Endothelial cell of umbilical vein (primary cell): ENCODE measurements at regions of chr7 and their contacts with region 1.

Region 1: GRCh38 chr7:91826377-91826776 is 54.1 kb downstream of the MTERF1 start:
- DNase-seq: no peak
- H3K4me3 ChIP-seq: no peak overlapping the region
- H3K27ac ChIP-seq: no peak overlapping the region
- H3K4me1 ChIP-seq: no peaks in the 10 kb centered on the region
- H3K27me3 ChIP-seq: no peaks in the 10 kb centered on the region
- CTCF ChIP-seq: no peak
- POLR2A ChIP-seq: no peak

Region 2: GRCh38 chr7:91852263-91852741 is 25.9 kb after region 1 on chr7:
- CTCF ChIA-PET with region 1: interaction called, 51 read pairs
- POLR2A ChIA-PET with region 1: no interaction called
- dilution Hi-C with region 1: no loop called
- intact Hi-C with region 1: loop called (anchors 1 kb)
- DNase-seq: peak; percentile 48
- H3K4me3 ChIP-seq: no peak overlapping the region
- H3K27ac ChIP-seq: no peak overlapping the region
- H3K4me1 ChIP-seq: no peaks in the 10 kb centered on the region
- H3K27me3 ChIP-seq: no peaks in the 10 kb centered on the region
- CTCF ChIP-seq: peak in 1 of 2 donors; percentile 29
- POLR2A ChIP-seq: no peak

Region 3: DNA sequence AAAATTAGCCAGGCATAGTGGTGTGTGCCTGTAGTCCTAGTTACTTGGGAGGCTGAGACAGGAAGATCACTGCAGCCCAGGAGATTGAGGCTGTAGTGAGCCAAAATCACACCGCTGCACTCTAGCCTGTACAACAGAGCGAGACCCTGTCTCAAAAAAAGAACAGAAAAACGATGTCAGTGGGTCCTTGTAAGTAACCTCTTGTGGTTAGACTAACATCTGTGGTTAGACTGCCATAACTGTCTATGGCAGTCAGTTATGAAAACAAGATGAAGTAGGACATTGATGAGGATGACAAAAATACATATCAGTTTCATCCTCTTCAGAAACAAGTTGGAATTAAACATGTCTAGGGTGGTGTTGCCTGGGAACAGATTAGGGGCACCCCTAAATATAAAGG is 167.6 kb after region 1 on chr7:
- CTCF ChIA-PET with region 1: no interaction called
- POLR2A ChIA-PET with region 1: no interaction called
- dilution Hi-C with region 1: no loop called
- intact Hi-C with region 1: no loop called
- DNase-seq: no peak
- H3K4me3 ChIP-seq: no peak overlapping the region
- H3K27ac ChIP-seq: no peak overlapping the region
- H3K4me1 ChIP-seq: no peaks in the 10 kb centered on the region
- H3K27me3 ChIP-seq: no peaks in the 10 kb centered on the region
- CTCF ChIP-seq: no peak
- POLR2A ChIP-seq: no peak